ENCODE measurements at regions of chr5 and their contacts with region 1.

Region 1: DNA sequence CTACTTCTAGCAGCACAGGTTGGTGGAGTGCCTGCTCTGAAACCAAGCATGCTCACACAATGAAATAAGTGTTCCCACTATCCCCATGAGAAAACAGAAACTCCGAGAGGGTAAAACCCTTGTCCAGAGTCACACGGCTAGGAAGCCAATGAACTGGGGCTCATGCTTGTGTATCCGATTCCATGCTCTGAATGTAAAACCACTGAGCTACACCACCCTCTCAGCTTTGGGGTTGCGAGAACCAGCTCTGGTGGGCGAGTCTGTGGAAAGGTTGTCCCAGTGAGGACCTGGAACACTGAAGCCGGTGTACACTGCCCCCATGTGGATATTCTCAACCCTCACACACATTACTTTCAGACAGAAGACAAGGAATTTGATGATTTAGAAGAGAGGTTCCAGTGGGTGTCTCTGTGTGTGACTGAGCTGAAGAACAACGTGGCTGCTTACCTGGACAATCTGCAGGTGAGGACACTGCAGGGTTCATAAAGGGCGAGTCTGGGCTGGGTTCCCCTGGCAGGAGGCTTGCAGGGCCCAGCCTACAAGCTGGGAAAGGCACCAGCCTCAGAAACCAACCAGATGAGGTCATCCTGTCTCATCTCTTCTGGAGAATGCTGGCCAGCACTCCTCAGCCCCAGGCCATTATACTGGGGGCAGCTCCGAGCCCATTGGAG is 37.4 kb downstream of the ARHGEF37 start:
- DNase-seq: no peak
- ATAC-seq: peak; percentile 35
- H3K4me3 Mint-ChIP-seq: peak overlapping the region; percentile 28
- H3K27ac Mint-ChIP-seq: peak overlapping the region; percentile 87
- H3K4me1 Mint-ChIP-seq: peaks cover 34% of the 10 kb centered on the region
- H3K27me3 Mint-ChIP-seq: no peaks in the 10 kb centered on the region
- CTCF ChIP-seq: no peak

Region 2: GRCh38 chr5:149317281-149318048 is 301.3 kb before region 1 on chr5:
- CTCF ChIA-PET with region 1: interaction called, 6 read pairs
- POLR2A ChIA-PET with region 1: no interaction called
- intact Hi-C with region 1: loop called (anchors 1 kb)
- DNase-seq: no peak
- ATAC-seq: no peak
- H3K4me3 Mint-ChIP-seq: no peak overlapping the region
- H3K27ac Mint-ChIP-seq: no peak overlapping the region
- H3K4me1 Mint-ChIP-seq: no peaks in the 10 kb centered on the region
- H3K27me3 Mint-ChIP-seq: no peaks in the 10 kb centered on the region
- CTCF ChIP-seq: no peak

Region 3: GRCh38 chr5:149381987-149382340 is 236.8 kb before region 1 on chr5:
- CTCF ChIA-PET with region 1: no interaction called
- POLR2A ChIA-PET with region 1: no interaction called
- intact Hi-C with region 1: loop called (anchors 1 kb)
- DNase-seq: peak; percentile 52
- ATAC-seq: peak; percentile 62
- H3K4me3 Mint-ChIP-seq: no peak overlapping the region
- H3K27ac Mint-ChIP-seq: no peak overlapping the region
- H3K4me1 Mint-ChIP-seq: peaks cover 4% of the 10 kb centered on the region
- H3K27me3 Mint-ChIP-seq: peaks cover 9% of the 10 kb centered on the region
- CTCF ChIP-seq: no peak

Region 4: GRCh38 chr5:149387081-149387631 is 231.6 kb before region 1 on chr5:
- CTCF ChIA-PET with region 1: no interaction called
- POLR2A ChIA-PET with region 1: no interaction called
- intact Hi-C with region 1: loop called (anchors 1 kb)
- DNase-seq: no peak
- ATAC-seq: no peak
- H3K4me3 Mint-ChIP-seq: no peak overlapping the region
- H3K27ac Mint-ChIP-seq: no peak overlapping the region
- H3K4me1 Mint-ChIP-seq: no peaks in the 10 kb centered on the region
- H3K27me3 Mint-ChIP-seq: peaks cover 3% of the 10 kb centered on the region
- CTCF ChIP-seq: no peak

Region 5: DNA sequence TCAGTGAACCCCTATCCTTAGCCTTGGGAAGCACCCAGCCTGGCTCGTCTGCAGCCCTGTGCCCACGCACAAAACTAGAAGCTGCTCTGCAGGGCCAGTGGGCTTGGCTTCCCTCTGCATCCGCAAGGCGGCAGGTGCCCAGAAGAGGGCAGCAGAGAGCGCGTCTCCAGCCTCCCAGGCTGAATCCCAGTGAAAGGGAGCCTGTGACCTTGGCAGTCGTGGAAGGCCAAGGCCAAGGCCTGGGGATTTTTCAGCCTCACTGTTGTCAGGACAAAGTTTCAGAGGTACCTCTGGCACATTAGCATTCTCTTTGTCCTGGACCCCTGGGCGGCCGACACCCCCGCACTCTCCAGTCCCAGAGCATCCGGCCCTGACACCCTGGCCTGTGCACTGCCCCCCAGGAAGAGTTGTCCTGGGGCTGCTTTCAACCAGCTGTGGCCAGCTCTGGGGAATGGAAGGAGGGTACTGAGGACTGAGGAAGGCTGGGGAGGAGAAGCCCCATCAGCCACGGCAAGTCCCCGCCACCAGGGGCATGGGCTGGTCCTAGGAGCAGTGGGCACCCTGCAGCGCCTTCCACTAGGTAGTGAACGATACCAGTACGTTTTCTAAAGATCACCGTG is 176.0 kb before region 1 on chr5:
- CTCF ChIA-PET with region 1: interaction called, 11 read pairs
- POLR2A ChIA-PET with region 1: no interaction called
- intact Hi-C with region 1: loop called (anchors 1 kb)
- DNase-seq: peak; percentile 59
- ATAC-seq: peak; percentile 71
- H3K4me3 Mint-ChIP-seq: no peak overlapping the region
- H3K27ac Mint-ChIP-seq: no peak overlapping the region
- H3K4me1 Mint-ChIP-seq: peaks cover 1% of the 10 kb centered on the region
- H3K27me3 Mint-ChIP-seq: peaks cover 11% of the 10 kb centered on the region
- CTCF ChIP-seq: peak; percentile 67

Region 6: DNA sequence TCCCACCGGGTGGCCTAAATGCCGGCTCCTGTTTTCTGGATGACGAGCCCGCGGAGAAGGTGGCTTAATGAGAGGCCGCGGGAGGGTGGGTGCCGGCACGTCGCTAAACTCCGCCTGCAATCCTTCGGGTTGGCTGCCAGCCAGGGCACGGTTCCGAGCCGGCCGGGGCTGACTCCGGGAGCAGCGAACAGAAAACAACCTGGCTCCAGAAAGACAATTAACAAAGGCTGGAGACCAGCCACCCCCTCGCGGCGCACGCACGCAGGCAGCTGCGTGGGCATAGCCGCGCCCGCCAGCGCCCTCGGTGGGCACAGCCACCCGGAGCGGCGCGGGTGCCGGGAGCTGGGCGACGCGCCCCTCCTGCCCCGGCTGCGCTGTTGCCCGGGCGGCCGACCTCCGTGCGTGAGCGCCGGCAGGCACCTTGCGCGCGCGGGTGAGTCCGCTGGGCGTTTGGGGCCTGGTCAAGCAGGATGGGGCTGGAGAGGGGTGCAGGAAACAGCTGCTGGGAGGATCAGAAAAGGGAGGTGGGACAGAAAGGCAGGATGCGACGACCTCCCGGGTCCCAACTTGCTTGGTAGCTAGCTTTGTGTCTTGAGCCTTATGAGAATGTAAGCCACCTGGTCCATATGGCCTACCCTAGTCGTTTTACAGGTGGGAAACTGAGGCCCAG is 37.4 kb before region 1 on chr5 and contains the start of gene ARHGEF37:
- CTCF ChIA-PET with region 1: no interaction called
- POLR2A ChIA-PET with region 1: interaction called, 5 read pairs
- intact Hi-C with region 1: loop called (anchors 2 kb)
- DNase-seq: peak; percentile 34
- ATAC-seq: peak; percentile 62
- H3K4me3 Mint-ChIP-seq: peak within 1 kb of the TSS; percentile 73
- H3K27ac Mint-ChIP-seq: no peak within 1 kb of the TSS
- H3K4me1 Mint-ChIP-seq: peaks cover 8% of the 10 kb centered on the region
- H3K27me3 Mint-ChIP-seq: peaks cover 16% of the 10 kb centered on the region
- CTCF ChIP-seq: no peak
- total RNA-seq, gene ARHGEF37: 0.88 and 1.1 TPM in 2 replicates

Region 7: GRCh38 chr5:149605998-149606724 is 12.6 kb before region 1 on chr5:
- CTCF ChIA-PET with region 1: interaction called, 6 read pairs
- POLR2A ChIA-PET with region 1: interaction called, 4 read pairs
- intact Hi-C with region 1: loop called (anchors 1 kb)
- DNase-seq: no peak
- ATAC-seq: peak; percentile 81
- H3K4me3 Mint-ChIP-seq: peak overlapping the region; percentile 59
- H3K27ac Mint-ChIP-seq: peak overlapping the region; percentile 77
- H3K4me1 Mint-ChIP-seq: peaks cover 22% of the 10 kb centered on the region
- H3K27me3 Mint-ChIP-seq: no peaks in the 10 kb centered on the region
- CTCF ChIP-seq: no peak